Left cardiac atrium (tissue), 4 donors: ENCODE measurements at regions of chr13 and their contacts with region 1.

Region 1: DNA sequence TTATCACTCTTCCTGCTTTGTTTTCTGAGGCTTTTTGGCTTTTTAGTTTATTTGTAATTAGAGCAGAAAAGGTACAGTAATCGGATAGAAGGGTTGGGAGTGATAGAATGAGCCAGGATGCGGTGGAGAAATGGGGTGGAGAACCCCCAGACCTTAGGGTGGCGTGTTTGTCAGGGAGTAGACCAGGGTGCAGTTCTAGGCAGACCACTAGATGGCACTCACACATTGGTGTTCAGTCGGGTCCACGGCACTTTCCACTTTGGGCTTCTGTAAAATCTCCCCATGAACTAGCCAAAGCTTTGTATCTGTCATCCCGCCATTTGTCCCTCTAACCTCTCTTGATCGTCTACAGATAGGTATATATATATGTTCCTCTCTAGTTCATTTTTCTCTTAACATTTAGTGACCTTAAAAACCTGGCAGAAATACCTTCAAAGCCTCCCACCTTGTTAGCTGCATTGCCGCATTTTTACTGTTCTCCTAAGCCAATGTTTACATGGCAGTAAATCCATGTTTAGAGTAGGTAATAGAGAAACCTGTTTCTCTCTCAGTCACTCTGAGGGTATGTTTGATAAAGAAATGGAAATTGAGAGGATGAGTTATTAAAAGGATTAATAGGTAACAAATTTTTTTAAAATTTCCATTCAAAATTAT is 154.9 kb downstream of the TM9SF2 start:
- DNase-seq: peak; percentile 73
- ATAC-seq: peak; percentile 63 to 64

Region 2: GRCh38 chr13:99606324-99607066 is 49.7 kb before region 1 on chr13:
- intact Hi-C with region 1: no loop called
- DNase-seq: peak; percentile 89
- ATAC-seq: peak; percentile 97 to 98

Region 3: DNA sequence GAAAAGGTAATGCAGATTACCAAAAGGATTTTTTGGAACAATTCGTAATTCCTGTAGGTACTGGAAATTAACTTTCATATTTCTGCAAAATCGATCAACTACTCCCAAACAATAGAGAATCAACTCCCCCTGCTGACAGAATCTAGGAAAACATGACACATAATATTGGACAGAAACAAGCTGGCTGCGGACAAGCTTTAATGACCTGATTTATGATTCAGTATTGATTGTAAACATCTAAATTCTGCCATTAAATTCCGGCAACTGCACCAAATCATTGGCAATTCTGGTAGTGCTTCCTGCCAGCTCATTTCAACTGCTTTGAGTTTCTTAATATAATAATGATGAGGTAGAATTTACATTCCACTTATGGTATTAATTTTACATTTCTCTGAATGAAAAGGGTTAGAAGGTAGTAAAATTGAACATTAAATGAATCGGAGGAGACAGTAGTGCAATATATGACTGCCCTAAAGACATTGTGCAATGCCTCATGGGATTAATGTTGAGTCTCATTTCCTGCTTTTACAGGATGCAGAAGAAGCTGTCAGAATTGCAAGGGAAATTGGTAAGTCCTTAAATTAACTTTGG is 579.2 kb after region 1 on chr13:
- intact Hi-C with region 1: loop called (anchors 2 to 10 kb)
- DNase-seq: no peak
- ATAC-seq: no peak

Region 4: GRCh38 chr13:100875392-100876043 is 1219.3 kb after region 1 on chr13:
- intact Hi-C with region 1: no loop called
- DNase-seq: no peak
- ATAC-seq: no peak